Endothelial cell of umbilical vein (primary cell): ENCODE measurements at regions of chr13 and their contacts with region 1.

Region 1: DNA sequence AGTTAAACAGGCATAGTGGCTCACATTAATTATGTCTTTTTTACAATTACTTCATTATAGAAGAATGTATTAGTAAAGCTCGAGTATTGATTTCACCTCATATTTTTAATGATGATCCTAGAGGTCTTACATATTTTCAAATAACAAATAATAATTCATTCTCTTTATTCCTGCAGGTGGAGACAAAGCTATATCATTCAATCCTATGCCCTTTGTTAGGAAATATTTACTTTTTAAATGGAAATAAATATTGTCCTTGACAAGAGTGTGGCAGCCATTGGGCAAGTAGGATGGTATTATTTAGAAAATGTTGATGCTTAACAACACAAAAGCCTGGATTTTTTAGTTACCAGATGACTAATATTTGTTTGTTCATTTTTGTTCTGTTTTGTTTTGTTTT is 127.6 kb downstream of the COG6 start:
- DNase-seq: peak; percentile 80
- H3K4me3 ChIP-seq: no peak overlapping the region
- H3K27ac ChIP-seq: no peak overlapping the region
- H3K4me1 ChIP-seq: peaks cover 62% of the 10 kb centered on the region
- H3K27me3 ChIP-seq: no peaks in the 10 kb centered on the region
- CTCF ChIP-seq: no peak
- POLR2A ChIP-seq: no peak

Region 2: GRCh38 chr13:39815345-39816111 is 32.5 kb after region 1 on chr13:
- CTCF ChIA-PET with region 1: interaction called, 21 read pairs
- POLR2A ChIA-PET with region 1: no interaction called
- dilution Hi-C with region 1: no loop called
- intact Hi-C with region 1: loop called (anchors 1 kb)
- DNase-seq: peak; percentile 79
- H3K4me3 ChIP-seq: no peak overlapping the region
- H3K27ac ChIP-seq: no peak overlapping the region
- H3K4me1 ChIP-seq: peaks cover 17% of the 10 kb centered on the region
- H3K27me3 ChIP-seq: no peaks in the 10 kb centered on the region
- CTCF ChIP-seq: peak; percentile 10 to 22
- POLR2A ChIP-seq: no peak

Region 3: DNA sequence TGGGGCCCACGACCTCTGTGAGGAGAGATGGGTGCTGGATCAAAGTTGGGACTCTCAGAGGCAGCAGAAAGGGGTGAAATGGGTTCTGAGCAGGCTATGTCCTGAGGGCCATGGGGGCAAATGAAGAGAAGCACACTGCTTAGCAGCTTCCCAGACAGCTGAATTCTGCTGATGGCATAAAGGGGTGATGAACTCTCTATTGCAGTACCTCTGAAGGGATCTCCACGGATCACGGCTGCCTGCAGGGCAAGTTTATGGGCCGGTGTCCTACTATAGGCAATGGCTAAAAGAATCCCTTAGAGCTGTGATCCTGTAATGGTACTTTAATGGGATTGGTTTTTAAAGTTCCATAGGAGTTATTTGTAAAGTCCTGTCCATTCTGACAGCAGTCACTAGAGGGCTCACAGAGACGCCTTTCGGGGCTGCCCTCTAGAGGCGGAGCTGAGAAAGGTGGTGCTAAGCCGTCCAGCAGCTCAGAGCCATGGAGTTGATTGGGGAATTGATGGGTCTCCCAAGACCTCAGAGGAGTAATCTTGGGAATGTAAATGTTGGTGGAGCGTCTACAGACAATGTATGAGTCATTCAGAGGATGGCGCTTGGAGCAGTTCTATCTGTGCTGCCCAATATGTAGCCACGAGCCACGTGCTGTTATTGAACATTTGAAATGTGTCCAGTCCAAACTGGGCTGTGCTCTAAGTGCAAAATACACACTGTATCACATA is 159.7 kb after region 1 on chr13:
- CTCF ChIA-PET with region 1: interaction called, 39 read pairs
- POLR2A ChIA-PET with region 1: no interaction called
- dilution Hi-C with region 1: no loop called
- intact Hi-C with region 1: loop called (anchors 1 kb)
- DNase-seq: peak; percentile 71
- H3K4me3 ChIP-seq: no peak overlapping the region
- H3K27ac ChIP-seq: no peak overlapping the region
- H3K4me1 ChIP-seq: peaks cover 3% of the 10 kb centered on the region
- H3K27me3 ChIP-seq: no peaks in the 10 kb centered on the region
- CTCF ChIP-seq: peak; percentile 86 to 94
- POLR2A ChIP-seq: no peak

Region 4: GRCh38 chr13:40069173-40070044 is 286.4 kb after region 1 on chr13:
- CTCF ChIA-PET with region 1: interaction called, 23 read pairs
- POLR2A ChIA-PET with region 1: no interaction called
- dilution Hi-C with region 1: no loop called
- intact Hi-C with region 1: no loop called
- DNase-seq: peak; percentile 69
- H3K4me3 ChIP-seq: no peak overlapping the region
- H3K27ac ChIP-seq: no peak overlapping the region
- H3K4me1 ChIP-seq: peaks cover 5% of the 10 kb centered on the region
- H3K27me3 ChIP-seq: no peaks in the 10 kb centered on the region
- CTCF ChIP-seq: peak; percentile 69 to 82
- POLR2A ChIP-seq: no peak

Region 5: GRCh38 chr13:40540328-40541044 is 757.4 kb after region 1 on chr13:
- CTCF ChIA-PET with region 1: interaction called, 3 read pairs
- POLR2A ChIA-PET with region 1: no interaction called
- dilution Hi-C with region 1: no loop called
- intact Hi-C with region 1: loop called (anchors 5 kb)
- DNase-seq: peak; percentile 96
- H3K4me3 ChIP-seq: no peak overlapping the region
- H3K27ac ChIP-seq: peak overlapping the region; percentile 80
- H3K4me1 ChIP-seq: peaks cover 18% of the 10 kb centered on the region
- H3K27me3 ChIP-seq: no peaks in the 10 kb centered on the region
- CTCF ChIP-seq: no peak
- POLR2A ChIP-seq: no peak